ENCODE measurements at regions of chr2 and their contacts with region 1.

Region 1: GRCh38 chr2:83827618-83828017 is 631.5 kb downstream of the SUCLG1 start:
- DNase-seq: no peak
- H3K4me3 ChIP-seq: no peak overlapping the region
- H3K27ac ChIP-seq: no peak overlapping the region
- H3K4me1 ChIP-seq: no peaks in the 10 kb centered on the region
- H3K27me3 ChIP-seq: no peaks in the 10 kb centered on the region
- CTCF ChIP-seq: no peak

Region 2: DNA sequence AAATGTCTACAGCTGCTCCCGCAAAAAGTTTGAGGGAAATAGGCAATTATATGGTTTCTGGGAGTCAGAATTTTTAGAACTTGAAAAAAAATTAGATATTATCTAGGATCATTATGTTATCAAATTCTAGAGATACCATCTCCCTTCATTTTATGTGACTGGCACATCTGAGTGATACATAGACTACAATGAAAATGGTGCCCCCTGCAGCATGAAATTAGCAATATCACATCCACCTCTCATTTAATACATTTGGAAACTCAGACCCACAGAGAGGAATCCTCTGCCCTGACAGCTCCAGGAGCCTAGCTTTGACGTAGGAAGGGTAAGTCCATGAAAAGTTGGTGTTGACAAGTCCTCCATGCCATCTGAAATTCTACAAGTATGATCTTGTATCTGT is 249.9 kb after region 1 on chr2:
- intact Hi-C with region 1: loop called (anchors 5 kb)
- DNase-seq: peak; percentile 25
- H3K4me3 ChIP-seq: no peak overlapping the region
- H3K27ac ChIP-seq: no peak overlapping the region
- H3K4me1 ChIP-seq: no peaks in the 10 kb centered on the region
- H3K27me3 ChIP-seq: no peaks in the 10 kb centered on the region
- CTCF ChIP-seq: peak; percentile 44

Region 3: DNA sequence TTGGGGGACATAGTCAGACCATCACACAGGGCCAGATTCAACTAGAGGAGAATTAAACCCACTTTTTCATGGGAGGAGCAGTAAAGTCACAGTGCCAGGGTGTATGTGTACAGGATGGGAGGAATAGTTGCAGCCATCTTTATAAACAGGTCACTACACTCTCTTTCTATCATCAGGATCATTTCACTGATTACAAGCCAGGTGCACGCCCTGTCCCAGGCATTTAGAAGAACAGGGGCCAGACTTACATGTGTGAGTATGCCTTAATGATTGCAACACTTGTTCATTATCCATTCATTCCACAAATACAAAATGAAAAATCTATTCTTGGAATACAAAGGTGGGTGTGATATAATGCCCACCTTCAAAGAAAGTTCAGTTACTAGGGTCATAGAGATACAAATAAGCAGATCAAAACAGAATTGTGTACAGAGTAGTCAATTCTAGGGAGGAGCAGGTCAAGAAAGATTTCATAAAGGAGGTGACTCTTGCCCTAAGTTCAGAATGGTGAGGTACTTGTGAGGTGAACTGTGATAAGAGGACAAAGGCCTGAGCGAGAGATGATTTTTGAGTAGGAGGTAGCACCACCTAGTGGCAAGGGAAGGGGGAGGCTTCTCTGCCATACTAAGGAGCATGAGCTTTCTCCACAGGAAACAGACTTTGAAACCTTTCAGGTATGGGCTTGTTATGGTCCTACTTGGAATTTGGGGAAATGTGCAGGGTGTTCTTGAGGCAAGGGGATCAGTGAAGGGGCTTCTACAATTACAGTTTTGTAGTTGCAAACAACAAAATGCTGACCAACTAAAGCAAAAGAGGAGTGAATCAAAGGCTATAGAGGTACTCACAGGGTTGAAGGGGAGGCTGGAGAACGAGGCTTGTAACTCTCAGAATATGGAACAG is 475.1 kb after region 1 on chr2:
- intact Hi-C with region 1: loop called (anchors 5 kb)
- DNase-seq: peak; percentile 66
- H3K4me3 ChIP-seq: no peak overlapping the region
- H3K27ac ChIP-seq: no peak overlapping the region
- H3K4me1 ChIP-seq: no peaks in the 10 kb centered on the region
- H3K27me3 ChIP-seq: no peaks in the 10 kb centered on the region
- CTCF ChIP-seq: peak; percentile 84